ENCODE measurements at regions of chr11 and their contacts with region 1.

Region 1: GRCh38 chr11:59062602-59063529 is 23.2 kb upstream of the GLYATL1B start:
- DNase-seq: no peak
- ATAC-seq: no peak
- H3K4me3 ChIP-seq: no peak overlapping the region
- H3K27ac ChIP-seq: no peak overlapping the region
- H3K4me1 ChIP-seq: no peaks in the 10 kb centered on the region
- H3K27me3 ChIP-seq: no peaks in the 10 kb centered on the region
- CTCF ChIP-seq: no peak
- POLR2A ChIP-seq: no peak

Region 2: GRCh38 chr11:58845366-58845765 is 217.5 kb before region 1 on chr11:
- intact Hi-C with region 1: loop called in 1 of 2 experiments (anchors 10 kb)
- DNase-seq: no peak
- ATAC-seq: no peak
- H3K4me3 ChIP-seq: no peak overlapping the region
- H3K27ac ChIP-seq: no peak overlapping the region
- H3K4me1 ChIP-seq: no peaks in the 10 kb centered on the region
- H3K27me3 ChIP-seq: no peaks in the 10 kb centered on the region
- CTCF ChIP-seq: no peak
- POLR2A ChIP-seq: no peak

Region 3: GRCh38 chr11:58919980-58920379 is 142.9 kb before region 1 on chr11:
- intact Hi-C with region 1: loop called in 1 of 2 experiments (anchors 10 kb)
- DNase-seq: no peak
- ATAC-seq: no peak
- H3K4me3 ChIP-seq: no peak overlapping the region
- H3K27ac ChIP-seq: no peak overlapping the region
- H3K4me1 ChIP-seq: peaks cover 0 to 21% (median 8%) of the 10 kb centered on the region in 4 donors
- H3K27me3 ChIP-seq: no peaks in the 10 kb centered on the region
- CTCF ChIP-seq: no peak
- POLR2A ChIP-seq: no peak

Measured in right lobe of liver (tissue), 6 donors.